Activated CD8-positive, alpha-beta T cell treated with anti-CD3 and anti-CD28 coated beads, Interleukin-2, amount 10 ng/mL, durations not matched to agents 7 days and 5 days (primary cell): ENCODE measurements at regions of chr10 and their contacts with region 1.

Region 1: DNA sequence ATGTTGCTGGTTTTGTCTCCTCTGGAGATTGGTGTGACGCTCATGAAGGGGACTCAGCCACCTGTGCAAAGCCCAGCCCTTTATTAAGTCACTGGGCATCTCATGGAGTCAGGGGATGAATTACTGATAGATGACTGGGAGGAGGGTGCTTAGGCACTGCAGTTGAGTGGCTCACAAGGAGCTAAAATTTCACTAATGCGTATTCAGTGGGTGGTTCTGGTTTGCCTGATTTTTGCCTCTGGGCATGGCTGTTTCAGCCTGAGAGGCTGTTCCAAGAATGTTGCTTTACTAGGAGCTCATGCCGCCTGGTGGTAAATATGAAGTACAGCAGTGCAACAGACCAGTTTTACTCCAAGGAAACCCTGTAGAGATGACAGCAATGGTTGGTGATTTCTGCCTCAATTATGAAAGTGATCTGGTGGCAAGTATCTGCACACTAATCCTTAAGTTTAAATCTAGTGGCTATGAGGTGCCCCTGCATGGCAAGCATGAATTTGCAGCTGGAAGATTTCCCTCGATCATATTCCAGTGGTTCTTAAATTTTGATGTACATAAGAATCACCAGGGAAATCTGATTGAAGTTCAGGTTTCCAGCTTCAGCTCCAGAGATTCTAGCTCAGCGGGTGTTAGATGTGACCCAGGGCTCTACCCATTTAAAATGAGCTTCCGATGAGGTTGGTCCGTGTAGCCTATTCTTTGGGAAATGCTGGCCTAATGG is 19.9 kb downstream of the ACTA2 start:
- DNase-seq: peak; percentile 64
- ATAC-seq: peak; percentile 70
- H3K4me3 Mint-ChIP-seq: no peak overlapping the region
- H3K27ac Mint-ChIP-seq: peak overlapping the region; percentile 12
- H3K4me1 Mint-ChIP-seq: peaks cover 26% of the 10 kb centered on the region
- H3K27me3 Mint-ChIP-seq: no peaks in the 10 kb centered on the region

Region 2: DNA sequence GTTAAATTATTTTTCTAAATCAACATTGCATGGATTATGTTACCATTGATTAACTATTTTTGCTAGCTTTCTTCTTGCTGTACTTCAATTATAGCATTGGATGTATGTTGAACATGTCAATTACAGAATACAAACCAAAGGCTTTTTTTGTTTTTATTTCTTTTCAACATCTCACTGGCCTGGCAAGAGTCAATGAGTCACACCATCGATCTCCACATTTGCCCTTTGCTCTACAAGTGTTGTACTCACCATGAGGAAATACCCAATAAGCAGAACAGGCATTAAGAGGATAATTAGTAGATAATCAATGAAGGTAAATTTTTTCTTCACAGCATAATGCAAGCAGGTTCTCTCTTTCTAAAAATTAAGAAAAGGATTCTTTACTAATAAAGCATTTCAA is 104.4 kb before region 1 on chr10:
- CTCF ChIA-PET with region 1: interaction called, 281 read pairs
- POLR2A ChIA-PET with region 1: no interaction called
- DNase-seq: no peak
- ATAC-seq: no peak
- H3K4me3 Mint-ChIP-seq: no peak overlapping the region
- H3K27ac Mint-ChIP-seq: no peak overlapping the region
- H3K4me1 Mint-ChIP-seq: peaks cover 83% of the 10 kb centered on the region
- H3K27me3 Mint-ChIP-seq: no peaks in the 10 kb centered on the region

Region 3: GRCh38 chr10:88901206-88901983 is 31.3 kb before region 1 on chr10:
- CTCF ChIA-PET with region 1: interaction called, 34 read pairs
- POLR2A ChIA-PET with region 1: interaction called, 3 read pairs
- DNase-seq: no peak
- ATAC-seq: peak; percentile 40
- H3K4me3 Mint-ChIP-seq: no peak overlapping the region
- H3K27ac Mint-ChIP-seq: peak overlapping the region; percentile 53
- H3K4me1 Mint-ChIP-seq: peaks cover 49% of the 10 kb centered on the region
- H3K27me3 Mint-ChIP-seq: no peaks in the 10 kb centered on the region

Region 4: GRCh38 chr10:88990384-88991160 is 57.9 kb after region 1 on chr10 and contains the start of gene FAS:
- CTCF ChIA-PET with region 1: interaction called, 98 read pairs
- POLR2A ChIA-PET with region 1: interaction called, 7 read pairs
- DNase-seq: peak; percentile 88
- ATAC-seq: peak; percentile 80
- H3K4me3 Mint-ChIP-seq: peak within 1 kb of the TSS; percentile 95
- H3K27ac Mint-ChIP-seq: peak within 1 kb of the TSS; percentile 95
- H3K4me1 Mint-ChIP-seq: peaks cover 71% of the 10 kb centered on the region
- H3K27me3 Mint-ChIP-seq: no peaks in the 10 kb centered on the region
- total RNA-seq, gene FAS: 58.5 to 62.6 TPM

Region 5: DNA sequence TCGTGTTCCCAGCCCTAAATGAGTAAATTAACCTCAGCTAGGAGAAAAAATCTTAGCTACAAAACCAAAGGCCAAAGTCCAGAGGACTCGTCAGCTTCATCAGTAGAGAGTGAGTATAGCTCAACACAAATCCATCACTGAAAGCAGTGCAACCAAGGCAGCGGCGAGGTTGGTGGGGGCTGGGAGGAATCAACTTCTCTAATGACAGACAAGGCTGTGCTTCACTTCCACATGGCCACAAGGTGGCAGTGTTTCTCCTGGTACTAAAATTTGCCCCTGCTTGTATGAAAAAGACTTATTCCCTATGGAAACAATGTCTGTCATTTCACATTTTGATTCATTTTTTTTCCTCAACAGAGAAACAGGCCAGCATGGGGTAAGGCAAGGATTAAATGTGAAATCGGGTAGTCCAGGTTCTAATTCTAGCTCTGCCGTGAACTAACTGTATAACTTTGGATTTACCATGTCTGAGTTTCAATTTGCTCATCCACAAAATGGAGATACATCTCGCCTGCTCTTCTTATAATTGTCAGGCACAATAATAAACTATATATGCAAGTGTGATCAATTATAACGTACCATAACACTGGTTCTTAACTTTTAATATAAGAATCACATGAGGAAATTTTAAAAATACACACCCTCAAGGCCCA is 97.2 kb after region 1 on chr10:
- CTCF ChIA-PET with region 1: interaction called, 28 read pairs
- POLR2A ChIA-PET with region 1: interaction called, 3 read pairs
- DNase-seq: peak; percentile 85
- ATAC-seq: peak; percentile 75
- H3K4me3 Mint-ChIP-seq: no peak overlapping the region
- H3K27ac Mint-ChIP-seq: no peak overlapping the region
- H3K4me1 Mint-ChIP-seq: peaks cover 15% of the 10 kb centered on the region
- H3K27me3 Mint-ChIP-seq: no peaks in the 10 kb centered on the region